ENCODE measurements at regions of chr7 and their contacts with region 1.

Region 1: DNA sequence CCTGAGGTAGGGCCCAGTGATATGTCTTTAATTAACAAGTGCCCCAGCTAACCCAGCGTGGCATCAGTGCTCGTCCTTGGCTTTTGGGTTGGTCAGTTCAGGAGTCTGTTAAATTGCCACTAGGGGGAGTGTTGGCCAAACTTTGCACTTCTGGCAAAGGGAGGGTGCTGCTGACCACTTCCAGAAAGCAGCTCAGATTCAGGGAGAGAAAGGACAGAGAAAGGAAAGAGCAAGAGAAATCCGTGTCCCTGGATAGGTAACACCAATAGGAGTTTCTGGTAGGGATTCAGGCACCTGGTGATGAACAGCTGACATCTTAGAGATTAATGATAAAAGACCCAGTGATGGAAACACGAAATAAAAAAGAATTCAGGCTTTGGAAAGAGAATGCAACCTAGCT is 243.1 kb upstream of the AOAH start:
- DNase-seq: peak in 1 of 2 donors; percentile 27
- H3K4me3 ChIP-seq: no peak overlapping the region
- H3K27ac ChIP-seq: no peak overlapping the region
- H3K4me1 ChIP-seq: no peaks in the 10 kb centered on the region
- H3K27me3 ChIP-seq: no peaks in the 10 kb centered on the region
- CTCF ChIP-seq: peak; percentile 61 to 77 (median 68)
- POLR2A ChIP-seq: no peak

Region 2: GRCh38 chr7:36904802-36905201 is 62.6 kb before region 1 on chr7:
- intact Hi-C with region 1: loop called (anchors 10 kb)
- DNase-seq: no peak
- H3K4me3 ChIP-seq: no peak overlapping the region
- H3K27ac ChIP-seq: no peak overlapping the region
- H3K4me1 ChIP-seq: no peaks in the 10 kb centered on the region
- H3K27me3 ChIP-seq: no peaks in the 10 kb centered on the region
- CTCF ChIP-seq: no peak
- POLR2A ChIP-seq: no peak

Region 3: DNA sequence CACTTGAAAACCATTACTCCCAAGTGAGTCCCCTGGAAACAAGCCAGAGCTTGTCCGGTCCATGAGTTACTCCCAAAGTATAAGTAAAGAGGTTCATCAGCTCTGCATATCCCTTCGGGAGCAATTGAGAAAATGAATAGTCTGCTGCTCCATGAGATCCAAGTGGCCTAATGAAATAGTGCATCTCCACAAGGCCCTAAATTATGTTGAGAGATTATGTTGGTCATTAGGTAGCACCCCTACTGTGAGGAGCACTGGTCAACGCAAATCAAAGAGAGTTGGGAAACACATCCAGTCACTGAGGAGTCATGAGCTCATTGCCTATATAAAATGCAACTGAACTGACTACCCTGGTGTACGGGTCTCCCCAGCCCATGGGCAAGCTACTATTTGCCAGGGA is 37.6 kb before region 1 on chr7:
- intact Hi-C with region 1: no loop called
- DNase-seq: no peak
- H3K4me3 ChIP-seq: no peak overlapping the region
- H3K27ac ChIP-seq: no peak overlapping the region
- H3K4me1 ChIP-seq: no peaks in the 10 kb centered on the region
- H3K27me3 ChIP-seq: no peaks in the 10 kb centered on the region
- CTCF ChIP-seq: no peak
- POLR2A ChIP-seq: no peak

Region 4: DNA sequence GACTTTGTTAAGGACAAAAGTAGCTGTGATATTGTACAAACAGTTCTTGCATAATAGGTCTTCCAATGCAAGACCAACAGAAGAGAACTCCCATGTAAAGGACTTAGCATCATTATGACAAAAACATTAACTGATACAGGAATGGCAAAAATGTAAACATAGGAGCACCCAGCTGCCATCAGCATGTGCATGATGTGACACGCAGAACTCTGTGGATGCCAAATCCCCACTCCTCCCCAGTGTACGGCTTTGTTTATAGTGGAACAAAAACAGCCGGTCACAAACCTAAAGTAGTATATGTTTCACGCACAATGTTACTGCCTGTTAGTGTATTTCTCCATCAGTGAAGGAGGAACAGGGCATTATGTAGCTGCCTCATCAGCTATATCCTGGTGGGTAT is 72.9 kb after region 1 on chr7:
- intact Hi-C with region 1: no loop called
- DNase-seq: no peak
- H3K4me3 ChIP-seq: no peak overlapping the region
- H3K27ac ChIP-seq: no peak overlapping the region
- H3K4me1 ChIP-seq: no peaks in the 10 kb centered on the region
- H3K27me3 ChIP-seq: no peaks in the 10 kb centered on the region
- CTCF ChIP-seq: no peak
- POLR2A ChIP-seq: no peak